ENCODE measurements at regions of chr11 and their contacts with region 1.

Region 1: DNA sequence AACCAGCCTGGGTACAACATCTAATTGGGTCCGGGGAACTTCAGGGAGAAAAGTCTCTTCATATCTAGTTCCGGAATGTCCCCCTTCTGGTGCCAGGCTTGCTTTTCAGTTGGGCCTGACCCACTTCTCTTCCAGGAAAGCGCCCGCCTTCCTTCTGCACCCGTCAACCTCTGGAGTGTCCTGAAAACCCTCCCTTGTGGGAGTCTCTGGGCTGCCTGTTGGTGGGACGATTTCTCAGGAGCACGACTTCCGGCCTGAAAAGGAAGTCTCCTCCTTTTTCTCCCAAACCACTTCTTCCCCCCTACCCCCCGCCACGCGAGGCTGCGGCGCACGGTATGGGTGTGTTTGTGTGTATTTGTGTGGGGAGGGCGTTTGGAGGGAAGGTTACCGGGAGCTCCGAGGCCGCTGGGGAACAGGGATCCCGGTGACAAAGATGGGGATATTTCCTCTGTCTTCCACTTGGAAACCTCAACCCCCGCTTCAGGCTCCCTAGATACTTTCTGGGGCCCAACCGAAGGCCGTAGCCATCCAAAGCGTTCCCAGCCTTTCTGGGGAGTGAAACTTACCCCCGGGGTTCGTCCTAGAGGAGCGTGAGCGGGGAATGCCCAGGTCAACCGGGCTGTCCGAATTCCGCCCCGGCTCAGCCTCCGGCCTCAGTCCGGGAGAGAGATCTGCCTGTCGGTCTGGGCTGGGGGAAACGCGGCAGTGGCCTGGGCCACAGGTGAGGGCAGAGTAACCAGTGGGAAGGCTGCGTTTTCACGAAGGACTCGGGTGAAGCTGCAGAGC is at the start of gene NKAPD1:
- DNase-seq: peak; percentile 26 to 91
- H3K4me3 ChIP-seq: peak within 1 kb of the TSS; percentile 78 to 82
- H3K27ac ChIP-seq: peak within 1 kb of the TSS; percentile 87 to 92
- H3K4me1 ChIP-seq: peaks cover 0 to 6% of the 10 kb centered on the region in 2 donors
- H3K27me3 ChIP-seq: no peaks in the 10 kb centered on the region
- CTCF ChIP-seq: peak in 1 of 3 experiments; percentile 6
- total RNA-seq, gene NKAPD1: 12.2 TPM

Region 2: DNA sequence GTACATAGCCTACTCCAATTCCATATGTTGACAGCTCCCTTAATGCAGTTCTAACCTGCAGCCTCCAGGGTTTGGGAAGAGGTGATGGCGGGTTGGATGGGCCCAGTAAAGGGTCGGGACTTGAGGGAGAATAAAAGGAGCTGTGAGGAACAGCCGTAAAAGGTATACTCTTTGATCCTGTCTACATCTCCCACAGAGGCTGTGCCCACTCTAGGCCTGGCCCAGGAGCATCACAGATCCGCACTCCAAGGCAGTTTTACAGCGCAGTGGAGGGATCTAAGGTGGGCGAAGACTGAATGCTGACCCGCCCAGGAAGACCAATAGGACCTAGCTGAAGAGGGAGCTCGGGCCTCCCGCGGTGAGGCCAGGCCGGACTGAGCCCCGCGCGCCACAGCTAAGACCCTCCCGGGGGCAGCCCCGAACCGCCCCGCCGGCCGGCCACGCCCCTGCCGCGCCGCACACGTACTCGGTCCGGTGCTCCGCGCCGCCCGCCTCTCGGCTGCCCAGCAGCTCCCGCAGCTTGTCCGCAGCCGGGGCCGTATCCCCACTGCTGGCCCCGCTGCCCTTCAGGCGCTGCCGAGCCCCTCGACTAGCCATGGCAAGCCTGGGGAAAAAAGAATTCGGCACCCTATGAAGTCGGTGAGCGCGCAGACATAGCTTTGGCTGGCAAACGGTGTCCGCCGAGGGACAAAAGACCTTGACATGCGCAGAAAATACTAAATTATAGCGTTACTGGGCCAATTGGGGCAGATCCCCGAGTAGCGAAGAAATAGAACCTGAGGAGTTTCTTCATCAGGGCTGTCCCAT is 203.1 kb before region 1 on chr11 and contains the start of gene ALG9:
- intact Hi-C with region 1: loop called (anchors 5 kb)
- DNase-seq: peak; percentile 22 to 89
- H3K4me3 ChIP-seq: peak within 1 kb of the TSS; percentile 92 to 97
- H3K27ac ChIP-seq: peak within 1 kb of the TSS; percentile 85 to 96
- H3K4me1 ChIP-seq: peaks cover 0 to 8% of the 10 kb centered on the region in 2 donors
- H3K27me3 ChIP-seq: no peaks in the 10 kb centered on the region
- CTCF ChIP-seq: peak in 1 of 3 experiments; percentile 40
- total RNA-seq, gene ALG9: 16.8 TPM

Region 3: GRCh38 chr11:111992206-111992855 is 81.9 kb before region 1 on chr11:
- intact Hi-C with region 1: no loop called
- DNase-seq: no peak
- H3K4me3 ChIP-seq: no peak overlapping the region
- H3K27ac ChIP-seq: no peak overlapping the region
- H3K4me1 ChIP-seq: no peaks in the 10 kb centered on the region
- H3K27me3 ChIP-seq: no peaks in the 10 kb centered on the region
- CTCF ChIP-seq: no peak

Region 4: DNA sequence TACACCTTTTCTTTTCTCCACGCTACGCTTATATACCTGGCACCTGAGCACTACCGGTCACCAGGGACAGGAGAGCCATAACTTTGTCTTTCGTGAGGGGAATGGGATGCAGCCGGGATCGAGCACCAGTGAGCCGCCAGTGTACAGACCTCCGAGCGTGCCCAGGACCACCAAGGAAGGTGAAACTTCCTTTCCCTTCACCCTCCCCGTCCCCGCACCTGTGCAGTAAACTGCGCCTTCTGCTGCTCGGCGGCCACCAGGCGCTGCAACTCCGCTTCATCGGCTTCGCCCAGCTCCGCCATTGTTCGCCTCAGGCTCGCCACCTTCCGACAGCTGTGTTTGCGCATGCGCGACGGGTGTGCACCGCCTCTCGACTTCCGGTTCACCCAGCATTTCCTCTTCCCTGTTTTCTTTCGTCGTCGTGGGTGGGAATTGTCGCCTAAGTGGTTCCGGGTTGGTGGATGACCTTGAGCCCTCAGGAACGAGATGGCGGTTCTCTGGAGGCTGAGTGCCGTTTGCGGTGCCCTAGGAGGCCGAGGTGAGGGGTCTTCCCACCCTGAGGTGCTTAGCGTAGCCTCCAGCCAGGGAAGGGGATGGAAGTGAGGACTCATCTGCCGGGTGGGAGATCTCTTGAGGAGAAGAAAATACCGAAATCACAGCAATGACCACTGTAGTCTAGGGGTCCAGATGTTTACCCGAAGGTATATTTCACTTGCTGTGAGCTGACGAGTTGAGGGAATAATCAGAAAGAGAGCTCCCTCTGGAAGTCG is 12.4 kb after region 1 on chr11 and contains the starts of genes SDHD and TIMM8B:
- intact Hi-C with region 1: loop called (anchors 1 kb)
- DNase-seq: peak; percentile 85 to 98
- H3K4me3 ChIP-seq: peak within 1 kb of the TSS; percentile 86 to 94
- H3K27ac ChIP-seq: peak within 1 kb of the TSS; percentile 63 to 75
- H3K4me1 ChIP-seq: peaks cover 5 to 23% of the 10 kb centered on the region in 2 donors
- H3K27me3 ChIP-seq: no peaks in the 10 kb centered on the region
- CTCF ChIP-seq: peak in 2 of 3 experiments; percentile 34 to 36
- total RNA-seq, gene SDHD: 68.5 TPM
- total RNA-seq, gene TIMM8B: 28.9 TPM

Measured in ascending aorta (tissue), 2 donors.